PC-9 (cell line): ENCODE measurements at regions of chr17 and their contacts with region 1.

Region 1: GRCh38 chr17:75689441-75689873 is 22.3 kb downstream of the SAP30BP start:
- DNase-seq: peak; percentile 57 to 96
- H3K4me3 ChIP-seq: peak overlapping the region; percentile 28; the same call in 1 of the 2 replicates
- H3K27ac ChIP-seq: peak overlapping the region; percentile 84
- H3K4me1 ChIP-seq: peaks cover 64% of the 10 kb centered on the region
- H3K27me3 ChIP-seq: no peaks in the 10 kb centered on the region
- CTCF ChIP-seq: no peak

Region 2: DNA sequence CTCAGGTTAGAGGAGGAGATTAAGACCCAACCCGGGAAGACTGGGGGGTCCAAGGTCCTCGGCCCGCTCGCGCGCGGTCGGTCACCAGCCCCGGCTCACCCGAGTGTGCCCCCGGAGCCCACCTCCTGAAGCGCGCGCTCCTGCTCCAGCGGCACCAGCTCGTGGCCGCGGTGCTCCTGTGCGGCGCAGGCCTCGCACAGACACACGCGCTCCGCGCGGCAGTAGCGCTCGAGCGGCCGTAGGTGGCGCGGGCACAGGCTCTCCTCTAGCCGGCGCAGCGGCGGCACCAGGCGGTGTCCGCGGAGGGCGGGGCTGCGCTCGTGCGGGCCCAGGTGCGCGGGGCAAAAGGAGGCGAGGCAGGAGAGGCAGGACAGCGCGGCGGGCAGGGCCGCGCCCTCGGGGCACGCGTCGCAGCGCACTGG is 188.3 kb after region 1 on chr17:
- CTCF ChIA-PET with region 1: no interaction called
- POLR2A ChIA-PET with region 1: interaction called, 3 read pairs
- intact Hi-C with region 1: loop called (anchors 2 kb)
- DNase-seq: peak; percentile 66 to 74
- H3K4me3 ChIP-seq: peak overlapping the region; percentile 96
- H3K27ac ChIP-seq: peak overlapping the region; percentile 87
- H3K4me1 ChIP-seq: peaks cover 35% of the 10 kb centered on the region
- H3K27me3 ChIP-seq: no peaks in the 10 kb centered on the region
- CTCF ChIP-seq: no peak

Region 3: DNA sequence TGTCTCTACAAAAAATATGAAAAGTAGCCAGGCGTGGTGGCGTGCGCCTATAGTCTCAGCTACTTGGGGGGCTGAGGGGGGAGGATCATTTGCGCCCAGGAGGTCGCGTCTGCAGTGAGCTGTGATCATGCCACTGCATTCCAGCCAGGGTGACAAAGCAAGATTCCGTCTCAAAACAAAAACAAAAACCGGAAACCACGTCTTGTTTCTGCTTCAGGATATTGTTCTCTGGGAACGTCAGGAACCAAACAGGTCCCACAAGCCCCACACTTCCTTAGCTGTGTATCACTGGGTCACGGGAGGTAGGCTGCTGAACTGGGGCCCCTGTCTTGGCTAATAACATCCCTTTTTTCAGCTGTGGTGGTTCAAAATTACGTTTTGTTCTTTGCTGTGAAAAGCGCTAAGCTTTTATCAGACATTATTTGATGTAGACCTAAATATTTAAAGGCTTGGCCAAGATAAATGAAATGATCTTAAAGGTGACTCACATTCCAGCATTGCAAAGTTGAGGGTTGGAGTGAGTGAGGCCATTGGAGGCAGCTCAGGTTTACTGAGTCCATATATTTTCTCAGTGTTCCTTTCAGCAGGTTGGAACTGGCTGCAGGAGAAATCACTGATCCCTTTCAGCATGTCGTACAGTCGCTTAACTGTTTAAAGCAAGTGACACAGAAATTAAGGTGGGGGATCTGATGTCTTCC is 1434.9 kb after region 1 on chr17:
- CTCF ChIA-PET with region 1: no interaction called
- POLR2A ChIA-PET with region 1: interaction called, 12 read pairs
- intact Hi-C with region 1: no loop called
- DNase-seq: peak; percentile 69 to 87
- H3K4me3 ChIP-seq: peak overlapping the region; percentile 25; the same call in 1 of the 2 replicates
- H3K27ac ChIP-seq: peak overlapping the region; percentile 98
- H3K4me1 ChIP-seq: peaks cover 54% of the 10 kb centered on the region
- H3K27me3 ChIP-seq: no peaks in the 10 kb centered on the region
- CTCF ChIP-seq: no peak